ENCODE measurements at regions of chr10 and their contacts with region 1.

Region 1: GRCh38 chr10:102835007-102835482 is 2.2 kb downstream of the CYP17A1 start:
- DNase-seq: peak; percentile 78 to 84
- ATAC-seq: peak; percentile 96 to 99
- H3K4me3 ChIP-seq: no peak overlapping the region
- H3K27ac ChIP-seq: no peak overlapping the region
- H3K4me1 ChIP-seq: no peaks in the 10 kb centered on the region
- CTCF ChIP-seq: peak; percentile 95
- EP300 ChIP-seq: no peak
- POLR2A ChIP-seq: no peak
- RAD21 ChIP-seq: peak; percentile 95 to 96

Region 2: GRCh38 chr10:102845352-102845902 is 10.4 kb after region 1 on chr10:
- CTCF ChIA-PET with region 1: interaction called, 35 read pairs
- POLR2A ChIA-PET with region 1: interaction called, 5 read pairs
- DNase-seq: no peak
- ATAC-seq: no peak
- H3K4me3 ChIP-seq: no peak overlapping the region
- H3K27ac ChIP-seq: no peak overlapping the region
- H3K4me1 ChIP-seq: no peaks in the 10 kb centered on the region
- CTCF ChIP-seq: no peak
- EP300 ChIP-seq: no peak
- POLR2A ChIP-seq: no peak
- RAD21 ChIP-seq: no peak

Region 3: GRCh38 chr10:102888048-102888447 is 53.0 kb after region 1 on chr10:
- CTCF ChIA-PET with region 1: interaction called, 11 read pairs
- POLR2A ChIA-PET with region 1: no interaction called
- DNase-seq: no peak
- ATAC-seq: no peak
- H3K4me3 ChIP-seq: no peak overlapping the region
- H3K27ac ChIP-seq: no peak overlapping the region
- H3K4me1 ChIP-seq: no peaks in the 10 kb centered on the region
- CTCF ChIP-seq: no peak
- EP300 ChIP-seq: no peak
- POLR2A ChIP-seq: no peak
- RAD21 ChIP-seq: no peak

Region 4: GRCh38 chr10:102917962-102918816 is 83.1 kb after region 1 on chr10 and contains the start of gene CNNM2:
- CTCF ChIA-PET with region 1: interaction called, 10 read pairs
- POLR2A ChIA-PET with region 1: no interaction called
- DNase-seq: peak; percentile 90 to 100
- ATAC-seq: peak; percentile 93
- H3K4me3 ChIP-seq: peak within 1 kb of the TSS; percentile 87
- H3K27ac ChIP-seq: peak within 1 kb of the TSS; percentile 85 to 93
- H3K4me1 ChIP-seq: peaks cover 28% of the 10 kb centered on the region
- CTCF ChIP-seq: 0 out of 3 replicates have a peak, but pooled peaks have one; percentile 27
- EP300 ChIP-seq: no peak
- POLR2A ChIP-seq: peak; percentile 63
- RAD21 ChIP-seq: peak in 1 of 2 experiments; percentile 48; a peak in 3 of 5 replicates
- polyA plus RNA-seq, gene CNNM2: 6.4 TPM in 2 replicates

Region 5: DNA sequence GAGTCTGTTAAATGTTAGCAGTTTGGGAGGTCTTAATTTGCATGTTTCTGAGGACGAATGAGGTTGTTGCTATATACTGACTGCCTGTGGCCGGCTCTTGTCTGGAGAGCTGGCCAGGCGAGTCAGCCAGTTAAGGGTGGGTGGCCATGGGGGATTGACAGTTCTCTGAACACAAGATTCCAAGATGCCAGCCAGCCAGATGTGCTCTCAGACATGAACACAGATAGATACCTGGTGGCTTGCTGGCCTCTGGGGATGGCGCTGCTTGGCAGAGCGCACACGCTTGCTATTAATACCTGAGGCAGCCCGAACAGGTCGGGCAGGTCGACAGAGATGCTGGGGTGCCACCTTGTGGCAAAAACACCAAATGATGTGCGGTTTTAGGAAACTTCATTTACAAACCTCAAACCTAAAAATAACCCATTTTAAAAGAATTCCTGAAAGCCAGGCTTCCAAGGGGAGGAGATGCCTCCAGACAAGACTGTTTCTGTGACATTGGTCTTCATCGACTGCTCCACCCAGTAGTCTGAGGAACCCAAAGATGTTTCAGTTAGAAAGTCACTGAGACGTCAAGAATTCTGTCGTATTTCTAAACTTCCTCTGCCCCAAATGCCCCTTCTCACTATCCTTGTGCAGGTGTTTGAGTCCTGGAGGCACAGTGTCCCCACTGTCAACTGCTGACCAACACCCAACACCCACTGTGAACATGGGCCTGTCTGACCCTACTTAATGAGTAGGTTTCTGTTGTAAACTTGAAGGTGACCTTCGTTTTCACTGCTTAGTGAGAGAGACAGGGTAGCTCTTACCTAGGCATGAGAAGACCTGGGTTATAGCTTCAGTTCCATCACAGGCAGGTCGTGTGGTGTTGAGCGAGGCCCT is 234.6 kb after region 1 on chr10:
- CTCF ChIA-PET with region 1: interaction called, 25 read pairs
- POLR2A ChIA-PET with region 1: no interaction called
- DNase-seq: peak; percentile 25 to 73
- ATAC-seq: peak; percentile 70 to 85
- H3K4me3 ChIP-seq: no peak overlapping the region
- H3K27ac ChIP-seq: no peak overlapping the region
- H3K4me1 ChIP-seq: no peaks in the 10 kb centered on the region
- CTCF ChIP-seq: peak; percentile 92
- EP300 ChIP-seq: no peak
- POLR2A ChIP-seq: no peak
- RAD21 ChIP-seq: peak; percentile 94 to 95